ENCODE measurements at regions of chr12 and their contacts with region 1.

Region 1: DNA sequence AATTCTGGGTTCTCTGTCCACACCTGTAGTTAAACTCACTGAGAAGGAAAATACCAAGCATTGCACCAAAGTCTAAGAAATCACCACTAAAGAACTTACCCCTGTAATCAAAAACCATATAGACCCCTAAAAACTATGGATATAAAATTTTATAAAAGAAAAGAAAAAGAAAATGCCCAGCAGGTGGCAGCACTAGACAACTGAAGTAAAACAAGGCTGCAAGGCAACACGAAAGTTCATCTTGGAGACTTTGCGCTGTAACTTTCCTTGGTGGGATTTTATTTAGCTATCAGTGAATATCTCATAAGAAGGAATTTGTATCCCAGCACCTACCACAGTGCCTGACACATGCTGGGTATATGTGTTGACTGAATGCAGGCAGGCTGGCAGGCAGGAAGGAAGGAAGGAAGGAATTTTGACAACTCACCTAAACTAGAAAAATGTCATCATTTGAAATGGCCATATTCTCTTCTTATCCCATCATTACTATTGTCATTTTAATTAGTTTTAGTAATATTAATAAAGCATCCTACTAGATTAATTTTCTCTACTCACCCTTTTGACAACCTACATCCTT is 68.2 kb upstream of the ETV6 start:
- DNase-seq: peak; percentile 67
- H3K4me3 Mint-ChIP-seq: no peak overlapping the region
- H3K27ac Mint-ChIP-seq: no peak overlapping the region
- H3K4me1 Mint-ChIP-seq: peaks cover 40% of the 10 kb centered on the region
- H3K27me3 Mint-ChIP-seq: no peaks in the 10 kb centered on the region
- CTCF ChIP-seq: peak; percentile 61

Region 2: DNA sequence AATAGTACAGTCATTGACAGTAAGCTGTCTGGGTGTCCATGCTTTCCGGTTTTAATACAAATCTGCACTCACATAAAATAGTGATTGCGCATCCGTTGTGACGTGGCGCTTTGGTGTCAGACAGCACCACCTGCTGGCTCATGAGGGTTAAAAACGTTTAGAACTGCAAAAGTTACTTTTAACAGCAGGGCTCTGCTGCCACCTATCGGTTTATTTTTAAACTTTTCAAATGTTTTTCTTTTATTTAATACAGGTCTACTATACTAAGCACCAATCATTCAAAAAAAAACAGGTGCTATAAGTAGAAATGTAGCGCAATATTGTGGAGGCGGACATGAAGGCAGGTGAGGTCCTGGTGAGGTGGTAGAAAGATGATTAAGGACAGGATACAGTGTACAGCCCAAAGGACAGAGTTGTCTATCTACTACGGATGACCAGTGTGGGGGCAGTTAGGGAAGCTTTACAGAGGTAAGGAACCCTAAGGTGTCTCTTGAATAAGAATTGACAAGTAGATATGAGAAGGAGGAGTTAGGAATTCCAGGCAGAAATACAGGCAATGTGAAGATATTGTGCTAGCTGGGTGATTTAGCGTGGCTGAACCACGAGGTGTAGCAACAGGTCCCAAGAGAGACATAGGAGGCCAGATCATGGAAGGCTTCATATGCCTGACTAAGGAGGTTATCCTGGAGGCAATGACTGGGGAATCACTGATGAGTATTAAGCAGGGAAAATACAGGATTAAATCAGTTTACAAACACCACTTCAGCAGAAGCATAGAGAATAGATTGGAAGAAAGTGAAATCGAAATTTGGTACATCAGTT is 94.4 kb before region 1 on chr12:
- CTCF ChIA-PET with region 1: no interaction called
- intact Hi-C with region 1: no loop called
- DNase-seq: peak; percentile 78
- H3K4me3 Mint-ChIP-seq: no peak overlapping the region
- H3K27ac Mint-ChIP-seq: no peak overlapping the region
- H3K4me1 Mint-ChIP-seq: peaks cover 21% of the 10 kb centered on the region
- H3K27me3 Mint-ChIP-seq: peaks cover 56% of the 10 kb centered on the region
- CTCF ChIP-seq: peak; percentile 97

Region 3: GRCh38 chr12:11517080-11517479 is 64.2 kb before region 1 on chr12:
- CTCF ChIA-PET with region 1: no interaction called
- intact Hi-C with region 1: no loop called
- DNase-seq: no peak
- H3K4me3 Mint-ChIP-seq: no peak overlapping the region
- H3K27ac Mint-ChIP-seq: no peak overlapping the region
- H3K4me1 Mint-ChIP-seq: no peaks in the 10 kb centered on the region
- H3K27me3 Mint-ChIP-seq: no peaks in the 10 kb centered on the region
- CTCF ChIP-seq: no peak

Region 4: GRCh38 chr12:11561411-11561810 is 19.9 kb before region 1 on chr12:
- CTCF ChIA-PET with region 1: no interaction called
- intact Hi-C with region 1: no loop called
- DNase-seq: no peak
- H3K4me3 Mint-ChIP-seq: no peak overlapping the region
- H3K27ac Mint-ChIP-seq: peak overlapping the region; percentile 20
- H3K4me1 Mint-ChIP-seq: peaks cover 13% of the 10 kb centered on the region
- H3K27me3 Mint-ChIP-seq: no peaks in the 10 kb centered on the region
- CTCF ChIP-seq: no peak

Region 5: DNA sequence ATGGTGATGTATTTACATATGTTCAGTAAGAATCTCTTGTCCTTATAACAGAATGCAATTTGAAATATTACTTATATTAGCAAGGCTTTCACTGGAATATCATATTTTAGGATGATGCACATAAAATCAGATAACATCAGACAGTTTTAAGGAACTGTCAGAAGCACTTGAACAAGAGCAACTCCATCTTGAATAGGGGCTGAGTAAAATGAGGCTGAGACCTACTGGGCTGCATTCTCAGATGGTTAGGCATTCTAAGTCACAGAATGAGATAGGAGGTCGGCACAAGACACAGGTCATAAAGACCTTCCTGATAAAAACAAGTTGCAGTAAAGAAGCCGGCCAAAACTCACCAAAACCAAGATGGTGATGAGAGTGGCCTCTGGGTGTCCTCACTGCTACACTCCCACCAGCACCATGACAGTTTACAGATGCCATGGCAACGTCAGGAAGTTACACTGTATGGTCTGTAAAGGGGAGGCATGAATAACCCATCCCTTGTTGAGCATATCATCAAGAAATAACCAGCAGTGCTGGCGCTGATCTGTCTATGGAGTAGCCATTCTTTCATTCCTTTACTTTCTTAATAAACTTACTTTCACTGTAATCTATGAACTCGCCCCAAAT is 40.6 kb after region 1 on chr12:
- CTCF ChIA-PET with region 1: interaction called, 17 read pairs
- intact Hi-C with region 1: loop called (anchors 5 kb)
- DNase-seq: no peak
- H3K4me3 Mint-ChIP-seq: no peak overlapping the region
- H3K27ac Mint-ChIP-seq: no peak overlapping the region
- H3K4me1 Mint-ChIP-seq: peaks cover 38% of the 10 kb centered on the region
- H3K27me3 Mint-ChIP-seq: no peaks in the 10 kb centered on the region
- CTCF ChIP-seq: no peak

Region 6: DNA sequence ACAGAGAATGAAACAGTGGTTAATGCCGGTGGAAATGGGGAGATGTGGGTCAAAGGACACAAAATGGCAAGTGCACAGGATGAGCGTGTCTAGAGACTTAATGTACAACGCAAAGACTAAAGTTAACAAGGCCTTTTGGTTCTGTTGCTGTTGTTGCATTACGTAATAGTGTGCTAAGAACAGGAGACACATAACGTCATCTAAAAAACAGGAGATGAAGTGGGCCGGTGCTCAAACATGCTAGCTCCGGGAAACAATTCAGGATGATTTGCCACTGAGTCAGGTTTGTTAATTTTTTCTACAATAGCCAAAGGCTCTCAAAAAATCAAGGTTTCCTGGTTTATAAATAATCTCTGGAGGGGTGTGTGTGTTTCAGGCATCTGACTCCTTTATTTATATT is 123.7 kb after region 1 on chr12:
- CTCF ChIA-PET with region 1: interaction called, 5 read pairs
- intact Hi-C with region 1: loop called (anchors 5 kb)
- DNase-seq: peak; percentile 52
- H3K4me3 Mint-ChIP-seq: no peak overlapping the region
- H3K27ac Mint-ChIP-seq: peak overlapping the region; percentile 74
- H3K4me1 Mint-ChIP-seq: peaks cover 94% of the 10 kb centered on the region
- H3K27me3 Mint-ChIP-seq: no peaks in the 10 kb centered on the region
- CTCF ChIP-seq: no peak

Region 7: DNA sequence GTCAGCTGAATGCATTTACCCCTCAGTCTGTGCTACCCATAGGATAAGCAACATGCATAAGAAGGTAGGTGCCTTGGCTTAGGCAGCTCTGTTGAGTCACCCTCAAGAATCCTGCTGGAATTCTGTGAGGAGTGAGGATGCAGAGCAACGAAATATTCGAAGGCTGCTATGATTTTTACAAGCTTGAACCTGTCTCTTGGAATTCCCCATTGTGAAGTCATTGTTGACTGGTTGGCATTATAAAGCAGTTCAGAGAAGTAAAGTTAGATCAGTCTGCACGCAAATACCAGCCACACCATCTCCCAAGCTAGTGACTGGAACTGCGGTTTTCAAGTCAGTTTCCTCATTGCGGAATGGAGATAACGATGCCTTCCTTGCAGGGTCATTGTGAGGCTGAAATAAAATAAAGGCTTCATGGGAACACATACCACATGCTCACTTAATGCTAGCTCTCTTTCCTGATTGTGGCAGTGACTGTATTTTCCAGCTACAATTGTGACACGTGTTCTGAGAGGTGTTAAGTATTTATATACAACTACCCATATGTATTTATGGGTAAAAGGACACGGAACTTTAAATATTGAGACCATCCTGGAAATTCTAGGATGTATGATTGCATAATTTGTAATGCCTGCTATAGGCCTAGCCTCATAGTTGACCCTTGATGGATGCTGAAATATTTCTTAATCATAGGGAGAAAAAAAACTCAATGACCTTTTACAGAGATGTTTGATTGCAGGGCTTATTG is 164.9 kb after region 1 on chr12:
- CTCF ChIA-PET with region 1: no interaction called
- intact Hi-C with region 1: loop called (anchors 5 kb)
- DNase-seq: peak; percentile 76
- H3K4me3 Mint-ChIP-seq: no peak overlapping the region
- H3K27ac Mint-ChIP-seq: peak overlapping the region; percentile 91
- H3K4me1 Mint-ChIP-seq: peaks cover 77% of the 10 kb centered on the region
- H3K27me3 Mint-ChIP-seq: no peaks in the 10 kb centered on the region
- CTCF ChIP-seq: no peak

Region 8: GRCh38 chr12:11877869-11878780 is 296.9 kb after region 1 on chr12:
- CTCF ChIA-PET with region 1: no interaction called
- intact Hi-C with region 1: loop called (anchors 5 kb)
- DNase-seq: peak; percentile 50
- H3K4me3 Mint-ChIP-seq: peak overlapping the region; percentile 49
- H3K27ac Mint-ChIP-seq: peak overlapping the region; percentile 97
- H3K4me1 Mint-ChIP-seq: peaks cover 78% of the 10 kb centered on the region
- H3K27me3 Mint-ChIP-seq: no peaks in the 10 kb centered on the region
- CTCF ChIP-seq: no peak

Region 9: GRCh38 chr12:12486661-12487240 is 905.5 kb after region 1 on chr12:
- CTCF ChIA-PET with region 1: no interaction called
- intact Hi-C with region 1: no loop called
- DNase-seq: no peak
- H3K4me3 Mint-ChIP-seq: no peak overlapping the region
- H3K27ac Mint-ChIP-seq: peak overlapping the region; percentile 79
- H3K4me1 Mint-ChIP-seq: peaks cover 16% of the 10 kb centered on the region
- H3K27me3 Mint-ChIP-seq: no peaks in the 10 kb centered on the region
- CTCF ChIP-seq: no peak

Measured in Calu3 (cell line).